Heart left ventricle (tissue), 16 donors: ENCODE measurements at regions of chr7 and their contacts with region 1.

Region 1: DNA sequence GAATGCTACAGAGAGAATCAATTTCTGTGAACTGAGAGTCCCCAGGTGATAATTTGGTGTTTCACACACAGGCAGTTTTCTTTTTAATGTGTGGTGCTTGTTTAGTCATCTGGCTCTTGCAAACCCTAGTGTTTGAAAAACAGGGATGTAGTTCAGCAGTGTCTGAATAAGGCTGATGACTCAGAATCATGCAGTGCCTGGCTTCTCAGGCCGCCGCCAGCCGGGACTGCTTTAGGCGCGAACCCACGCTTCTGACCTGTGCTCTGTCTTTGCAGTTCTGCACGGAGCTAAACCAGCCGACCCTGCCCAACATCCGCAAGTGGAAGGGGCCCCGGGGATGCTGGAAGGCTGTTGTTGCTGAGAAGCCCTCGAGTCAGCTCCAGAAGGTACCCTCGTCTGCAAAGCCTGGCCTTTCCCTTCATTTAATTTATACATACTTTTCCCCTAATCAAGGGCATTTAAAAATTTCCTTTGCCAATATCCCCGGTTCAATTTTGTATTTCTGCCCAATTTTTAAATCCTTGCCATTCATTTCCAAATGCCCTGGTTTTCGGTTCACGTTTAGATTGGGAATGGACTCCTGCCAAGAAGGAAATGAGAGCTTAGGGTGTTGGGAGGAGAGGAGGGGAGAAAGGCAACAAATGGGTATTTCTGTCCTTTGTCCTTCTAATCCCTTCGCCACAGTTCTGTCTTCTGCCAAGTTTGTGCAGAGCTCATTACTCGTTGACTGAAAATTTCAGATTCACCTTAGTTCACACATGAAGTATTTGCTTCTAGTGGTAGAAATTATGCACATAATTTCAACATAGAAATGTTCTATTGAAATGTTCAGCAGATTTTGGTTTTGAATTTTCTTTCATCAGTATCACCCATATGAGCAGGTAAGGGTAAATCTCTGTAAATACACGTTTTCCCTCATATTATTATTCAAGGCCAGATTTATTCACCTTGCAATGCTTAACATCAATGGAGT is 108.5 kb upstream of the ANLN start:
- DNase-seq: peak; percentile 60 to 82 (median 73)
- ATAC-seq: peak; percentile 79 to 90 (median 84)
- H3K4me3 ChIP-seq: peak overlapping the region in 5 of 12 donors; percentile 11 to 32 (median 22)
- H3K27ac ChIP-seq: peak overlapping the region in 10 of 12 donors; percentile 17 to 79 (median 60)
- H3K4me1 ChIP-seq: peaks cover 4 to 79% (median 51%) of the 10 kb centered on the region in 12 donors
- H3K27me3 ChIP-seq: no peaks in the 10 kb centered on the region
- CTCF ChIP-seq: peak in 1 of 12 donors; percentile 15
- POLR2A ChIP-seq: no peak

Region 2: DNA sequence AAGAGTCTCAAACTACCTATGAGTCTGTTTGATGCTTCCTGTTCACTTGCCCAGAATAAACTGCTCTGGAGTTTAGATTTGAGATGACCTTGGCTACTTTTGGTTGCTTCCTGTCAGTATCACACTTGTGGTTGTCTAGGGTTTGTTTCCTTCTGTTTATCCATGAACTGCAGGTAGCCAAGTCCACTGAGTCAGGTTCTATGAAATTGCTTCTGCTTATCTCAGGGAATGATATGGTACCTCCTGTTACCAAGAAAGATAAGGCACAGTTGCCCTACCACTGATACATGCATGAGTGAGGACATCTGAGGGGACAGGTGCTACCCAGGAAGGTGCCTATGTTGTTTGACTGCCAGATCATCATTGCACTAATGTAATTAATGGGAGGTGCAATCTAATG is 143.9 kb before region 1 on chr7:
- intact Hi-C with region 1: no loop called
- DNase-seq: no peak
- ATAC-seq: peak in 3 of 4 donors; percentile 34 to 36 (median 36)
- H3K4me3 ChIP-seq: no peak overlapping the region
- H3K27ac ChIP-seq: no peak overlapping the region
- H3K4me1 ChIP-seq: peaks cover 0 to 11% (median 0%) of the 10 kb centered on the region in 12 donors
- H3K27me3 ChIP-seq: no peaks in the 10 kb centered on the region
- CTCF ChIP-seq: no peak
- POLR2A ChIP-seq: no peak

Region 3: GRCh38 chr7:36161981-36162380 is 119.1 kb before region 1 on chr7:
- intact Hi-C with region 1: loop called in 4 of 10 experiments (anchors 5 to 10 kb)
- DNase-seq: no peak
- ATAC-seq: no peak
- H3K4me3 ChIP-seq: no peak overlapping the region
- H3K27ac ChIP-seq: no peak overlapping the region
- H3K4me1 ChIP-seq: peaks cover 0 to 58% (median 33%) of the 10 kb centered on the region in 12 donors
- H3K27me3 ChIP-seq: no peaks in the 10 kb centered on the region
- CTCF ChIP-seq: no peak
- POLR2A ChIP-seq: no peak

Region 4: GRCh38 chr7:36207451-36208291 is 73.5 kb before region 1 on chr7:
- intact Hi-C with region 1: loop called in 2 of 10 experiments (anchors 10 kb)
- DNase-seq: peak; percentile 42 to 81 (median 59)
- ATAC-seq: peak; percentile 70 to 89 (median 85)
- H3K4me3 ChIP-seq: no peak overlapping the region
- H3K27ac ChIP-seq: peak overlapping the region in 6 of 12 donors; percentile 10 to 70 (median 30)
- H3K4me1 ChIP-seq: peaks cover 6 to 83% (median 54%) of the 10 kb centered on the region in 12 donors
- H3K27me3 ChIP-seq: no peaks in the 10 kb centered on the region
- CTCF ChIP-seq: peak in 5 of 12 donors; percentile 14 to 29 (median 22)
- POLR2A ChIP-seq: no peak

Region 5: GRCh38 chr7:36227223-36227622 is 53.9 kb before region 1 on chr7:
- intact Hi-C with region 1: loop called in 1 of 10 experiments (anchors 10 kb)
- DNase-seq: peak in 3 of 5 donors; percentile 31 to 54 (median 39)
- ATAC-seq: peak in 3 of 4 donors; percentile 67 to 77 (median 70)
- H3K4me3 ChIP-seq: no peak overlapping the region
- H3K27ac ChIP-seq: peak overlapping the region in 2 of 12 donors; percentile 8 to 23
- H3K4me1 ChIP-seq: peaks cover 0 to 44% (median 12%) of the 10 kb centered on the region in 12 donors
- H3K27me3 ChIP-seq: no peaks in the 10 kb centered on the region
- CTCF ChIP-seq: no peak
- POLR2A ChIP-seq: no peak